Dorsolateral prefrontal cortex (tissue), 120 donors: ENCODE measurements at regions of chr19 and their contacts with region 1.

Region 1: GRCh38 chr19:15432629-15433518 is 14.1 kb upstream of the AKAP8L start:
- DNase-seq: peak; percentile 83 to 97 (median 90)
- H3K4me3 ChIP-seq: peak overlapping the region; percentile 57 to 99 (median 80)
- H3K27ac ChIP-seq: peak overlapping the region in 57 of 59 donors; percentile 30 to 93 (median 84)
- H3K27me3 ChIP-seq: no peaks in the 10 kb centered on the region
- CTCF ChIP-seq: peak in 9 of 56 donors; percentile 6 to 30 (median 14)

Region 2: GRCh38 chr19:15125232-15126067 is 307.4 kb before region 1 on chr19:
- intact Hi-C with region 1: loop called in 1 of 2 experiments (anchors 10 kb)
- DNase-seq: peak; percentile 95 to 98 (median 97)
- H3K4me3 ChIP-seq: peak overlapping the region; percentile 51 to 100 (median 90)
- H3K27ac ChIP-seq: peak overlapping the region; percentile 62 to 99 (median 94)
- H3K27me3 ChIP-seq: no peaks in the 10 kb centered on the region
- CTCF ChIP-seq: peak in 37 of 56 donors; percentile 5 to 60 (median 30)

Region 3: DNA sequence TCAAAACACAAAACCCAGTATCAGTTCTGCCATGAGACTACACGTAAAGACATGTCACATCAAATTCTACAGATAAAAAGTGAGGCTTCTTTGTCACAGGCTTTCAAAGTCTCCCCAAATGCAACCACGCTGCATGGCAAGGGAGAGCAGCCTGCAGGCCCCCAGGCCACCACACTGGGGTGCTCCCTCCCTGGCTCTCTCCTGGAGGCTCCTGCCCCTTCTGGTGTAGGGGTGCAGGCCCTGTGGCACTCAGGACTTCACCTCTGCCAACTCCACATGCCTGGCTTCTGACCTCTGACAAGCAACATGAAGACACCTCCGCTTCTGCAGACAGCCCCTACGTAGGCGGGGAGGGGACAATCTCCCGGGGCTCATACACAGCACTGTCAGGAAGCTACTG is 67.6 kb before region 1 on chr19:
- intact Hi-C with region 1: no loop called
- DNase-seq: no peak
- H3K4me3 ChIP-seq: no peak overlapping the region
- H3K27ac ChIP-seq: peak overlapping the region in 31 of 59 donors; percentile 2 to 67 (median 38)
- H3K27me3 ChIP-seq: no peaks in the 10 kb centered on the region
- CTCF ChIP-seq: no peak

Region 4: DNA sequence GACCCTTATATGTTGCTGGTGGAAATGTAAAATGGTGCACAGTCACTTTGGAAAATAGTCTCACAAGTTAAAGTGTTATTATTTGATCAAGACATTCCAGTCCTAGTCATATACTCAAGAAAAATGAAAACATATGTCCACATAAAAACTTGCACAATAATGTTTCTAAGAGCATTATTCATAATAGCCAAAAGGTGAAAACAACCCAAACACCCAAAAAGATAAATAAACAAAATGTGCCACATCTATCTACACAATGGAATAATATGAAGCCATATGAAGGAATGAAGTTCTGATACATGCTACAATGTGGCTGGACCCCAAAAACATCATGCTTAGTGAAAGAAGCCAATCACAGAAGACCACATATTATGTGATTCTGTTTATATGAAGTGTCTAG is 38.9 kb before region 1 on chr19:
- intact Hi-C with region 1: no loop called
- DNase-seq: no peak
- H3K4me3 ChIP-seq: no peak overlapping the region
- H3K27ac ChIP-seq: no peak overlapping the region
- H3K27me3 ChIP-seq: no peaks in the 10 kb centered on the region
- CTCF ChIP-seq: no peak

Region 5: GRCh38 chr19:15418588-15419412 is 14.1 kb before region 1 on chr19 and contains the start of gene AKAP8L:
- intact Hi-C with region 1: loop called (anchors 1 kb)
- DNase-seq: peak; percentile 91 to 99 (median 98)
- H3K4me3 ChIP-seq: peak within 1 kb of the TSS; percentile 73 to 100 (median 98)
- H3K27ac ChIP-seq: peak within 1 kb of the TSS; percentile 0 to 97 (median 89)
- H3K27me3 ChIP-seq: no peaks in the 10 kb centered on the region
- CTCF ChIP-seq: peak in 53 of 56 donors; percentile 29 to 69 (median 52)
- total RNA-seq, gene AKAP8L: 104 to 260 (median 142) TPM

Region 6: GRCh38 chr19:15449620-15450527 is 17.0 kb after region 1 on chr19 and contains the start of gene WIZ:
- intact Hi-C with region 1: loop called in 1 of 2 experiments (anchors 2 kb)
- DNase-seq: peak in 9 of 10 donors; percentile 59 to 87 (median 72)
- H3K4me3 ChIP-seq: peak within 1 kb of the TSS; percentile 47 to 89 (median 74)
- H3K27ac ChIP-seq: peak within 1 kb of the TSS in 28 of 59 donors; percentile 10 to 79 (median 54)
- H3K27me3 ChIP-seq: peaks cover 0 to 29% (median 14%) of the 10 kb centered on the region in 45 donors
- CTCF ChIP-seq: no peak
- total RNA-seq, gene WIZ: 26.2 to 74.6 (median 41.4) TPM